Activated CD4-positive, alpha-beta memory T cell treated with anti-CD3 and anti-CD28 coated beads for 36 hours (primary cell): ENCODE measurements at regions of chr3 and their contacts with region 1.

Region 1: GRCh38 chr3:119034256-119035013 is at the start of gene IGSF11:
- DNase-seq: peak; percentile 71
- H3K4me3 Mint-ChIP-seq: peak within 1 kb of the TSS; percentile 80
- H3K27ac Mint-ChIP-seq: no peak within 1 kb of the TSS
- H3K4me1 Mint-ChIP-seq: peaks cover 4% of the 10 kb centered on the region
- H3K27me3 Mint-ChIP-seq: peaks cover 38% of the 10 kb centered on the region
- total RNA-seq, gene IGSF11: 0.14 to 0.15 TPM

Region 2: GRCh38 chr3:118955914-118956556 is 78.4 kb before region 1 on chr3:
- CTCF ChIA-PET with region 1: interaction called, 4 read pairs
- POLR2A ChIA-PET with region 1: no interaction called
- intact Hi-C with region 1: loop called (anchors 5 kb)
- DNase-seq: no peak
- H3K4me3 Mint-ChIP-seq: no peak overlapping the region
- H3K27ac Mint-ChIP-seq: peak overlapping the region; percentile 55
- H3K4me1 Mint-ChIP-seq: peaks cover 33% of the 10 kb centered on the region
- H3K27me3 Mint-ChIP-seq: no peaks in the 10 kb centered on the region

Region 3: GRCh38 chr3:119098619-119099222 is 64.3 kb after region 1 on chr3:
- CTCF ChIA-PET with region 1: interaction called, 17 read pairs
- POLR2A ChIA-PET with region 1: no interaction called
- intact Hi-C with region 1: loop called (anchors 2 kb)
- DNase-seq: no peak
- H3K4me3 Mint-ChIP-seq: no peak overlapping the region
- H3K27ac Mint-ChIP-seq: no peak overlapping the region
- H3K4me1 Mint-ChIP-seq: no peaks in the 10 kb centered on the region
- H3K27me3 Mint-ChIP-seq: no peaks in the 10 kb centered on the region